Activated CD8-positive, alpha-beta T cell treated with anti-CD3 and anti-CD28 coated beads for 36 hours (primary cell): ENCODE measurements at regions of chr2 and their contacts with region 1.

Region 1: GRCh38 chr2:27703638-27704341 is 40.1 kb downstream of the SLC4A1AP start:
- DNase-seq: peak; percentile 93
- ATAC-seq: peak; percentile 86
- H3K4me3 Mint-ChIP-seq: no peak overlapping the region
- H3K27ac Mint-ChIP-seq: no peak overlapping the region
- H3K4me1 Mint-ChIP-seq: peaks cover 9% of the 10 kb centered on the region
- H3K27me3 Mint-ChIP-seq: no peaks in the 10 kb centered on the region
- CTCF ChIP-seq: peak; percentile 83

Region 2: GRCh38 chr2:27689424-27689823 is 14.4 kb before region 1 on chr2:
- CTCF ChIA-PET with region 1: interaction called, 64 read pairs
- POLR2A ChIA-PET with region 1: no interaction called
- intact Hi-C with region 1: no loop called
- DNase-seq: no peak
- ATAC-seq: no peak
- H3K4me3 Mint-ChIP-seq: no peak overlapping the region
- H3K27ac Mint-ChIP-seq: no peak overlapping the region
- H3K4me1 Mint-ChIP-seq: peaks cover 11% of the 10 kb centered on the region
- H3K27me3 Mint-ChIP-seq: no peaks in the 10 kb centered on the region
- CTCF ChIP-seq: no peak

Region 3: GRCh38 chr2:27715318-27716210 is 11.8 kb after region 1 on chr2:
- CTCF ChIA-PET with region 1: interaction called, 17 read pairs
- POLR2A ChIA-PET with region 1: interaction called, 5 read pairs
- intact Hi-C with region 1: no loop called
- DNase-seq: peak; percentile 70
- ATAC-seq: peak; percentile 43
- H3K4me3 Mint-ChIP-seq: peak overlapping the region; percentile 29
- H3K27ac Mint-ChIP-seq: no peak overlapping the region
- H3K4me1 Mint-ChIP-seq: peaks cover 46% of the 10 kb centered on the region
- H3K27me3 Mint-ChIP-seq: peaks cover 15% of the 10 kb centered on the region
- CTCF ChIP-seq: no peak

Region 4: DNA sequence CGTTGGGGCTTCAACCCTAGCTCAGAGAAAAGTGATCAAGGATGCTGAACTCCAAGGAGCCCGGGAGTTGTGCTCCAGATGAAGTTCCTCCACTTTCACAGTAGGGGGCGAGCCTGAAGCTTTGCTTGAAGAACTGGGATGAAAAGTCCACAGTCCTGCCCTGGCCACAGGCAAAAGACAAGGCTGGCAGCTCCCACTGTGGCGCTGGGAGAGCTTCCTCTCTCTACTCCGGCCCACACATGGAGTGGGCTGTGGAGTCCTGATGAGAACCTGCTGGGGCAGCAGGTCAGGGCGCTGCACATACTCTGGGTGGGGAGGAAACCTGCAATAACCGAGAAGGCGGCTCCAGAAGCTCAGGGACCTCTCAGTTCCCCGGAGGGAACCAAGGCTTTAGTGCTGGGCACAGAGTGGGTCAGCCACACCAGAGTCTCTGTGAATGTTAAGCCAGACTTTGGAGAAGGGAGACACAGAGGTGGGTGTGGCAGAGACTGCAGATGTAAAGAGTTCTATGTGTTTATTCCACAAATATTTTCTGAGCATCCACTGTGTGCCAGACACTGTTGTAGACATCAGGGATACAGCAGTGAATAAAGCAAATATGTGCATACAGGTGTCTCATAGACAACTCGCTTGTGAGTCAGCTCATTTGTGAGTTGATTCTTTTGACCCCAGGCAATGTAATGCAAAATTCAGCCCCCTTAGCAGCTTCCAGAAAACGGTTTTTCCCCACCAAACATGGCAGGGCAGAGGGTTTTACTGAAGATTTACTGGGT is 19.8 kb after region 1 on chr2:
- CTCF ChIA-PET with region 1: interaction called, 40 read pairs
- POLR2A ChIA-PET with region 1: interaction called, 3 read pairs
- intact Hi-C with region 1: no loop called
- DNase-seq: peak; percentile 30
- ATAC-seq: no peak
- H3K4me3 Mint-ChIP-seq: no peak overlapping the region
- H3K27ac Mint-ChIP-seq: no peak overlapping the region
- H3K4me1 Mint-ChIP-seq: peaks cover 28% of the 10 kb centered on the region
- H3K27me3 Mint-ChIP-seq: peaks cover 6% of the 10 kb centered on the region
- CTCF ChIP-seq: peak; percentile 77

Region 5: GRCh38 chr2:27754138-27754588 is 50.4 kb after region 1 on chr2:
- CTCF ChIA-PET with region 1: interaction called, 12 read pairs
- POLR2A ChIA-PET with region 1: no interaction called
- intact Hi-C with region 1: no loop called
- DNase-seq: peak; percentile 86
- ATAC-seq: peak; percentile 98
- H3K4me3 Mint-ChIP-seq: no peak overlapping the region
- H3K27ac Mint-ChIP-seq: no peak overlapping the region
- H3K4me1 Mint-ChIP-seq: no peaks in the 10 kb centered on the region
- H3K27me3 Mint-ChIP-seq: peaks cover 5% of the 10 kb centered on the region
- CTCF ChIP-seq: peak; percentile 98

Region 6: GRCh38 chr2:27860111-27860510 is 156.3 kb after region 1 on chr2:
- CTCF ChIA-PET with region 1: no interaction called
- POLR2A ChIA-PET with region 1: no interaction called
- intact Hi-C with region 1: no loop called
- DNase-seq: no peak
- ATAC-seq: peak; percentile 69
- H3K4me3 Mint-ChIP-seq: no peak overlapping the region
- H3K27ac Mint-ChIP-seq: no peak overlapping the region
- H3K4me1 Mint-ChIP-seq: peaks cover 20% of the 10 kb centered on the region
- H3K27me3 Mint-ChIP-seq: no peaks in the 10 kb centered on the region
- CTCF ChIP-seq: no peak

Region 7: DNA sequence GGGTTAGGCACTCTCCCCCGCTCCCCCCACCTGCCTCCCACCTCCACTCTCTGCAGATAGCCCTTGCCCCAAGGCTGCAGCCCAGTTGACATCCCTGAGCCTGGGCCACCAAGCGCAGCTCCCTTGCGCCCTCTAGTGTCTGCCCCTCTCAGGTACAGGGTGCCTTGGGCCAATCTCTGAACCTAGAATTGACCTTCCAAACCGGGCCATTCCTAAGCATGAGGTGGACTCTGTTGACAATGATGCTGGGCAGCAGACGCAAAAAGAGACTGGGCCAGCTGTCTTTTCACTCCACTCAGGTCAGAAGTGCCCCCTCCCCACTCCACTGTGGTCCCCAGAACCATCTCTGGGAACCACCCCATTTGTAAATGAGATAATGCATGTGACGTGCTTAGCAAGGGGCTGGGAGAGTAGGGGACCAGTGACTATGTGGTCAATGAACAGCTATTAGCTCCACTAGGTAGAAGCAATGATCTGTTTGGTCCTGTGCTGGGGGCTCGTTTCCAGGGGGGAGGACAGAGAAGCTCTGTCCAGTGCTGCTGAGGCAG is 748.8 kb after region 1 on chr2:
- CTCF ChIA-PET with region 1: interaction called, 5 read pairs
- POLR2A ChIA-PET with region 1: no interaction called
- intact Hi-C with region 1: loop called (anchors 5 kb)
- DNase-seq: peak; percentile 91
- ATAC-seq: peak; percentile 72
- H3K4me3 Mint-ChIP-seq: no peak overlapping the region
- H3K27ac Mint-ChIP-seq: no peak overlapping the region
- H3K4me1 Mint-ChIP-seq: peaks cover 41% of the 10 kb centered on the region
- H3K27me3 Mint-ChIP-seq: no peaks in the 10 kb centered on the region
- CTCF ChIP-seq: peak; percentile 96